ENCODE measurements at regions of chr9 and their contacts with region 1.

Region 1: DNA sequence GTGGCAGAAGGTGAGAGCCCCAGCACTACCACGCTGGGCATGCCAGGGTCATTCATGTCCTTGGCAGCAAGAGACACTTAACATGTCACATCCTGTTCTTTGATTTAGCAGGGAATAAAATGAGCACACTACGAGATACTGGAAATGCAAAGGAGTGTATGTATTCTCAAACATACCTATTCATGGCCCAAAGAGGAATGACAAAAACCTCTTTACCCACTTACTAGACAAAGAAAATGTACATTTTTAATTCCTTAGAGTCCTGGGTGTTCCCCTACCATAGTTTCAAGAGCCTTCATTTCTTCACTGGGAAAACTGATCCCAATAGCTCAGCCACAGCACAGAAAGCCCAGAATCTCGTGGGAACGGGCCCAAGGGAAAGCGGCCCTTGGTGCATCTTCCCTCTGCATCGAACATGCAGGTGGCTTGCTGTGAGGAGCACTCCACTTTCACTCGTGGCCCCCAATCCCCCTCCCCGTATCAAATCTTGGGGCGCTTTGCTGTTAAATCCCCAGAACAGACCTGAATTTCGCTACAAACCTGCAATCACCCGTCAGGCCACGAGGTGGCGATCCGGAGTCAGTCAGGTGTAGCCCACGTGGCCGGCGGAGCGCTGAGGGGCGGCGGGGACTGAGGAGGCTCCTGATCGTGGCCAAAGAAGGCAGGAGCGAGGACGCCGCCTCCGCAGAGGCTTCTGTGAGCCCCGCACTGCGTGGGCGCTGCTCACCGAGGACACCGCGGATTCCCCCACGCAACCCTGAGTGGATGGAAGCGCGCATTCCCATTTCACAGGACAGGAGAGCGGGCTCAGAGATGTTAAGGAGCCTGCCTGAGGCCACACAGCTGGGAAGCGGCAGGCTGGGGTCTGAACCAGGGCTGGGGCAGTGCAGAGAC is 91.4 kb downstream of the LMX1B start:
- DNase-seq: peak; percentile 71 to 93 (median 86)
- ATAC-seq: peak; percentile 86
- H3K4me3 ChIP-seq: peak overlapping the region; percentile 7 to 35
- H3K4me3 Mint-ChIP-seq: peak overlapping the region; percentile 44
- H3K27ac ChIP-seq: no peak overlapping the region
- H3K27ac Mint-ChIP-seq: no peak overlapping the region
- H3K4me1 ChIP-seq: peaks cover 13% of the 10 kb centered on the region
- H3K4me1 Mint-ChIP-seq: peaks cover 19% of the 10 kb centered on the region
- H3K27me3 ChIP-seq: peaks cover 8% of the 10 kb centered on the region in 2 experiments
- H3K27me3 Mint-ChIP-seq: peaks cover 30% of the 10 kb centered on the region
- CTCF ChIP-seq: peak; percentile 90

Region 2: DNA sequence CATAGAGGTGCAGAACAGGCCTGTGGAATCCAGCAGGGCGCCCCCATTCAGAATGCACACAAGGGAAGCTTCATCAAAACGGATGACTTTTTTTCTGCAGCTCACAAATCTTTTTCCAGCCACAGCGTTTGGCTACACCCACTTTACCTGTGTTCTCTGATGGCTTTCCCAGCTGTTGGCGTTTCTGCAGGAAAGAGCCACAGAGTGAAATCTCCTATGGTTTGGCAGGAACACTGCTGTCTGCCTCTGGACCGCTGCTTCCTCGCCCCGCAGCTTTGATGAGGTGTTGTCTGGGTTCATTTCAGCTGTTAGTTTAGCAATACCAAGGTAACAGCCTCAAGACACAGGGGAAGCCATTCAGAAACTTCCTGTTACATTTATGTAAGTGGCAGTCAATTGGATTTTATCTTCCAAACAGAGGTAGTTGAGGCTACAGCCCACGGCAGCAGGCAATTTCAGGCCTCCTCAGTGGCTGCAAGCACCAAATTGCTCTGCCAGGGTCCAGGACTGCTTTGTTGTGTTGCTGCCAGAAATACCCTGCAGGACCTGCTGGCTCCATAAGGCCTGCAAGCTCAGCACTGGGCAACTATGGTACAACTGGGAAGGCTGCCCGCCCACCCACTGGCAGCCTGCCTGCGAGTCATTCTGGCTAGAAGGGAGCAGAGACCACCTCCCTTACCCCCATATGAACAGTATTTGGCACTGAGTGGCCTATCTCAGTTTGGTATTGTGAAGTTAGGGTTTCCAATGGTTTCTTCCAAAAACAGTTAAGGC is 281.8 kb before region 1 on chr9:
- CTCF ChIA-PET with region 1: no interaction called
- POLR2A ChIA-PET with region 1: no interaction called
- intact Hi-C with region 1: no loop called
- DNase-seq: peak in 3 of 9 experiments; percentile 19 to 53 (median 20)
- ATAC-seq: peak; percentile 62
- H3K4me3 ChIP-seq: no peak overlapping the region
- H3K4me3 Mint-ChIP-seq: peak overlapping the region; percentile 33
- H3K27ac ChIP-seq: no peak overlapping the region
- H3K27ac Mint-ChIP-seq: peak overlapping the region; percentile 79
- H3K4me1 ChIP-seq: peaks cover 21% of the 10 kb centered on the region
- H3K4me1 Mint-ChIP-seq: peaks cover 39% of the 10 kb centered on the region
- H3K27me3 ChIP-seq: no peaks in the 10 kb centered on the region
- H3K27me3 Mint-ChIP-seq: no peaks in the 10 kb centered on the region
- CTCF ChIP-seq: no peak

Region 3: DNA sequence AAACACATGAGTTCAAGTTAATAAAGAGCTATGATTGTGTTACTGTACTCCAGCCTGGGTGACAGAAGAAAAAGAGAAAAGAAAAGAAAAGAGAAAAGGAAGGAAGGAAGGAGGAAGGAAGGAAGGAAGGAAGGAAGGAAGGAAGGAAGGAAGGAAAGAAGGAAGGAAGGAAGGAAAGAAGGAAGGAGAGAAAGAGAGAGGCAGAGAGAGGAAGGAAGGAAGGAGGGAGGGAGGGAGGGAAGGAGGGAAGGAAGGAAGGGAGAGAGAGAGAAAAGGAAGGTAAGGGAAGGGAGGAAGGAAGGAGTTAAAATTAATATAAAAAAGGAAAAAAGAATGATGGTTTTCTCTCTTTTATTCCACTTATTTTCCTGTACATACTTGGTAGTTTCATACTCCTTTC is 10.3 kb after region 1 on chr9:
- CTCF ChIA-PET with region 1: interaction called, 51 read pairs
- POLR2A ChIA-PET with region 1: interaction called, 4 read pairs
- intact Hi-C with region 1: loop called in 1 of 2 experiments (anchors 1 kb)
- DNase-seq: no peak
- ATAC-seq: no peak
- H3K4me3 ChIP-seq: no peak overlapping the region
- H3K4me3 Mint-ChIP-seq: no peak overlapping the region
- H3K27ac ChIP-seq: no peak overlapping the region
- H3K27ac Mint-ChIP-seq: no peak overlapping the region
- H3K4me1 ChIP-seq: peaks cover 19% of the 10 kb centered on the region
- H3K4me1 Mint-ChIP-seq: peaks cover 27% of the 10 kb centered on the region
- H3K27me3 ChIP-seq: no peaks in the 10 kb centered on the region
- H3K27me3 Mint-ChIP-seq: no peaks in the 10 kb centered on the region
- CTCF ChIP-seq: no peak

Region 4: GRCh38 chr9:126733005-126733404 is 27.9 kb after region 1 on chr9:
- CTCF ChIA-PET with region 1: interaction called, 30 read pairs
- POLR2A ChIA-PET with region 1: no interaction called
- intact Hi-C with region 1: no loop called
- DNase-seq: no peak
- ATAC-seq: no peak
- H3K4me3 ChIP-seq: no peak overlapping the region
- H3K4me3 Mint-ChIP-seq: no peak overlapping the region
- H3K27ac ChIP-seq: no peak overlapping the region
- H3K27ac Mint-ChIP-seq: no peak overlapping the region
- H3K4me1 ChIP-seq: no peaks in the 10 kb centered on the region
- H3K4me1 Mint-ChIP-seq: no peaks in the 10 kb centered on the region
- H3K27me3 ChIP-seq: peaks cover 0 to 2% of the 10 kb centered on the region in 2 experiments
- H3K27me3 Mint-ChIP-seq: no peaks in the 10 kb centered on the region
- CTCF ChIP-seq: no peak

Region 5: GRCh38 chr9:126763130-126763764 is 58.1 kb after region 1 on chr9:
- CTCF ChIA-PET with region 1: interaction called, 660 read pairs
- POLR2A ChIA-PET with region 1: no interaction called
- intact Hi-C with region 1: no loop called
- DNase-seq: no peak
- ATAC-seq: no peak
- H3K4me3 ChIP-seq: no peak overlapping the region
- H3K4me3 Mint-ChIP-seq: no peak overlapping the region
- H3K27ac ChIP-seq: no peak overlapping the region
- H3K27ac Mint-ChIP-seq: no peak overlapping the region
- H3K4me1 ChIP-seq: no peaks in the 10 kb centered on the region
- H3K4me1 Mint-ChIP-seq: no peaks in the 10 kb centered on the region
- H3K27me3 ChIP-seq: no peaks in the 10 kb centered on the region
- H3K27me3 Mint-ChIP-seq: no peaks in the 10 kb centered on the region
- CTCF ChIP-seq: no peak

Region 6: GRCh38 chr9:126791406-126792151 is 86.5 kb after region 1 on chr9:
- CTCF ChIA-PET with region 1: interaction called, 660 read pairs
- POLR2A ChIA-PET with region 1: interaction called, 3 read pairs
- intact Hi-C with region 1: no loop called
- DNase-seq: no peak
- ATAC-seq: no peak
- H3K4me3 ChIP-seq: no peak overlapping the region
- H3K4me3 Mint-ChIP-seq: no peak overlapping the region
- H3K27ac ChIP-seq: no peak overlapping the region
- H3K27ac Mint-ChIP-seq: no peak overlapping the region
- H3K4me1 ChIP-seq: no peaks in the 10 kb centered on the region
- H3K4me1 Mint-ChIP-seq: no peaks in the 10 kb centered on the region
- H3K27me3 ChIP-seq: no peaks in the 10 kb centered on the region
- H3K27me3 Mint-ChIP-seq: peaks cover 35% of the 10 kb centered on the region
- CTCF ChIP-seq: no peak

Region 7: GRCh38 chr9:128607642-128608350 is 1902.7 kb after region 1 on chr9:
- CTCF ChIA-PET with region 1: no interaction called
- POLR2A ChIA-PET with region 1: no interaction called
- intact Hi-C with region 1: no loop called
- DNase-seq: no peak
- ATAC-seq: no peak
- H3K4me3 ChIP-seq: no peak overlapping the region
- H3K4me3 Mint-ChIP-seq: no peak overlapping the region
- H3K27ac ChIP-seq: no peak overlapping the region
- H3K27ac Mint-ChIP-seq: no peak overlapping the region
- H3K4me1 ChIP-seq: no peaks in the 10 kb centered on the region
- H3K4me1 Mint-ChIP-seq: peaks cover 3% of the 10 kb centered on the region
- H3K27me3 ChIP-seq: no peaks in the 10 kb centered on the region
- H3K27me3 Mint-ChIP-seq: no peaks in the 10 kb centered on the region
- CTCF ChIP-seq: no peak